ENCODE measurements at regions of chr6 and their contacts with region 1.

Region 1: GRCh38 chr6:132530293-132530974 is 7.6 kb upstream of the TAAR9 start:
- DNase-seq: peak; percentile 32
- ATAC-seq: peak; percentile 88
- H3K4me3 ChIP-seq: peak overlapping the region; percentile 15 to 34; a peak in 3 of 4 replicates
- H3K27ac ChIP-seq: no peak overlapping the region
- H3K4me1 ChIP-seq: peaks cover 10% of the 10 kb centered on the region
- H3K27me3 ChIP-seq: no peaks in the 10 kb centered on the region
- CTCF ChIP-seq: peak; percentile 81

Region 2: GRCh38 chr6:132669690-132670291 is 139.4 kb after region 1 on chr6:
- CTCF ChIA-PET with region 1: no interaction called
- POLR2A ChIA-PET with region 1: no interaction called
- in situ Hi-C with region 1: no loop called
- intact Hi-C with region 1: loop called (anchors 10 kb)
- DNase-seq: peak; percentile 24
- ATAC-seq: peak; percentile 76; the same call in 1 of the 2 replicates
- H3K4me3 ChIP-seq: no peak overlapping the region
- H3K27ac ChIP-seq: no peak overlapping the region
- H3K4me1 ChIP-seq: no peaks in the 10 kb centered on the region
- H3K27me3 ChIP-seq: no peaks in the 10 kb centered on the region
- CTCF ChIP-seq: peak; percentile 66

Region 3: GRCh38 chr6:132713352-132714134 is 183.1 kb after region 1 on chr6 and contains the start of gene VNN1:
- CTCF ChIA-PET with region 1: interaction called, 3 read pairs
- POLR2A ChIA-PET with region 1: no interaction called
- in situ Hi-C with region 1: no loop called
- intact Hi-C with region 1: loop called (anchors 5 kb)
- DNase-seq: no peak
- ATAC-seq: no peak
- H3K4me3 ChIP-seq: no peak within 1 kb of the TSS
- H3K27ac ChIP-seq: no peak within 1 kb of the TSS
- H3K4me1 ChIP-seq: no peaks in the 10 kb centered on the region
- H3K27me3 ChIP-seq: no peaks in the 10 kb centered on the region
- CTCF ChIP-seq: no peak
- total RNA-seq, gene VNN1: not detected

Region 4: DNA sequence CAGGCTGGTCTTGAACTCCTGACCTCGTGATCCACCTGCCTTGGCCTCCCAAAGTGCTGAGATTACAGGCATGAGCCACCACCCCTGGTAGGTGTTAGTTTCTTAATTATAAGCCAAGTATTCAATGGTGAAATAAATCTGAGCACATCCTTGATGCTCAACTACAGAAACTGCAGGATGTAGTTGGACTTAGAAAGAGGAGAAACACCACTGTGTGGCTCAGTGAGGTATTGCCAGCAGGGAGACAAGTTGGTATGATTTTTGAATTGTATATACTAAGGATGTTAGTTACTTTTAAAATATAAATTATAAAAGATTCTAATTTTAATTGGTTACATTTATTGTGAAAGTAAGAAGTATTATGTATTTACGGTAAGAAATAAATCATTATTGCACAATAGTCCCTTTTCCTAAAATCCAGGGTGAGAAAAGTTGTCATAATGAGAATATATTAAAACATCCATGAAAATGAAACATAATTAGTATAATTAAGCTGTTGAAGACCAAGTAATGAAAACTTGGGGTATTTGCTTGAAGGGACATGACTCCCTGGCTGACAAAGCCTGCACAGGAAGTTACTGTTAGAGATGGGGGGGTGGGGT is 250.4 kb after region 1 on chr6:
- CTCF ChIA-PET with region 1: interaction called, 5 read pairs
- POLR2A ChIA-PET with region 1: no interaction called
- in situ Hi-C with region 1: no loop called
- intact Hi-C with region 1: loop called (anchors 5 kb)
- DNase-seq: no peak
- ATAC-seq: peak; percentile 73; the same call in 1 of the 2 replicates
- H3K4me3 ChIP-seq: no peak overlapping the region
- H3K27ac ChIP-seq: no peak overlapping the region
- H3K4me1 ChIP-seq: no peaks in the 10 kb centered on the region
- H3K27me3 ChIP-seq: no peaks in the 10 kb centered on the region
- CTCF ChIP-seq: peak; percentile 63

Region 5: GRCh38 chr6:132798869-132799538 is 268.6 kb after region 1 on chr6:
- CTCF ChIA-PET with region 1: interaction called, 3 read pairs
- POLR2A ChIA-PET with region 1: no interaction called
- in situ Hi-C with region 1: no loop called
- intact Hi-C with region 1: loop called (anchors 5 kb)
- DNase-seq: no peak
- ATAC-seq: peak; percentile 96
- H3K4me3 ChIP-seq: peak overlapping the region; percentile 53 to 66
- H3K27ac ChIP-seq: no peak overlapping the region
- H3K4me1 ChIP-seq: peaks cover 4% of the 10 kb centered on the region; the same call in 1 of the 2 replicates
- H3K27me3 ChIP-seq: no peaks in the 10 kb centered on the region
- CTCF ChIP-seq: no peak; the same call in 1 of the 2 replicates

Measured in Panc1 (cell line).